ENCODE measurements at regions of chr13 and their contacts with region 1.

Region 1: DNA sequence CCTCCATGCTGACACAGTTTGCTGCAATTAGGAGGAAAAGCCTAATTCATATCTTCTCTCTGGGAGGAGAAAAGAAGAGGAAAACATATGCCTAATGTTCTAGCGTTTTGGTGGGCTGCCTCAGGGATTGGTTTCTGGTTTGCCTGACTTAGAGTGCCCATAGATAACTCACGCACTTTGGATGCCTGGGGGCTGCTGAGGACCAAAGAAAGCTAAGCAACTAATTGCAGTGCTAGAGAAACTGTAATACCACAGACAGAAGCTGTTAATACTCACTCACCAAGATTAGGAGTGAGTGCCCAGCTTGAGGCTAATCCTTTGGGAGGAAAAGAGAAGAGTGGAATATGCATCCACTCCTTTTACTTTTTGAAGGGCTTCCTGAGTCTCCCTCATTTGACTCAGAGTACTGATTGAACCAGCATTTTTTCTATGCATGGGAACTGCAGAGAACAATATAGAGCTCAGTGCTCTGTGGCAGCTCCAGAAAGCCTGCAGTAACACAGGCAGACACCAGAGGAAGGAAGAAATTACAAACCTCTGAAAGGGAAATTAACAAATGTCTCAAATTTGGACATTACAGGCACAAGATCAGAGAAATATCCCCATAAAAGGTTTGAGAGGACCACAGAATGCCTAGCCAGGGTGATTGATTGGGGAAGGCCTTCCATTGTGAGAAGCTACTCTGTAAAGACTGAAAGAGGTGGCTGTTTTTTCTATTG is 666.4 kb downstream of the OLFM4 start:
- DNase-seq: no peak
- ATAC-seq: no peak

Region 2: GRCh38 chr13:53732664-53733063 is 37.7 kb after region 1 on chr13:
- intact Hi-C with region 1: no loop called
- DNase-seq: no peak
- ATAC-seq: no peak

Region 3: DNA sequence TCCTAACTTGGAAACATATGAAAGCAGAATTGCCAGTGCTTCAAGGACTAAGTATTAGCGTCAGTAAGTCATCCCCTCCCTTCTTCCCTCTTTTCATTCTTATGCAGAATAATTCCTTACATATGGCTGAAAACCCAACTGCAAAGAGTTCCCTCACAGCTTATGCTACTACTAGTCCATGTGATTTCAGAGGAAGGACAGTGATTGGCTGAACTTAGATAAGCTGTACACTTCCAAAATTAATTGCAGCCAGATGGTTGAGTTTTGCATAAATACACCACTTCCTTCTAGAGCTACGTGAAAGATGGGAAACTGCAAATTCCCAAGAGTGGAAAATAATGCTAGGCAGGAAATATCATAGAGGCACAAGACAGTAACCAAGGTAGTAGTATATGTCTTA is 64.0 kb after region 1 on chr13:
- intact Hi-C with region 1: no loop called
- DNase-seq: no peak
- ATAC-seq: no peak

Region 4: GRCh38 chr13:54989418-54989817 is 1294.4 kb after region 1 on chr13:
- intact Hi-C with region 1: loop called (anchors 5 kb)
- DNase-seq: no peak
- ATAC-seq: no peak

Measured in sciatic nerve (tissue), 2 donors.